Testis (tissue), 5 donors: ENCODE measurements at regions of chr17 and their contacts with region 1.

Region 1: DNA sequence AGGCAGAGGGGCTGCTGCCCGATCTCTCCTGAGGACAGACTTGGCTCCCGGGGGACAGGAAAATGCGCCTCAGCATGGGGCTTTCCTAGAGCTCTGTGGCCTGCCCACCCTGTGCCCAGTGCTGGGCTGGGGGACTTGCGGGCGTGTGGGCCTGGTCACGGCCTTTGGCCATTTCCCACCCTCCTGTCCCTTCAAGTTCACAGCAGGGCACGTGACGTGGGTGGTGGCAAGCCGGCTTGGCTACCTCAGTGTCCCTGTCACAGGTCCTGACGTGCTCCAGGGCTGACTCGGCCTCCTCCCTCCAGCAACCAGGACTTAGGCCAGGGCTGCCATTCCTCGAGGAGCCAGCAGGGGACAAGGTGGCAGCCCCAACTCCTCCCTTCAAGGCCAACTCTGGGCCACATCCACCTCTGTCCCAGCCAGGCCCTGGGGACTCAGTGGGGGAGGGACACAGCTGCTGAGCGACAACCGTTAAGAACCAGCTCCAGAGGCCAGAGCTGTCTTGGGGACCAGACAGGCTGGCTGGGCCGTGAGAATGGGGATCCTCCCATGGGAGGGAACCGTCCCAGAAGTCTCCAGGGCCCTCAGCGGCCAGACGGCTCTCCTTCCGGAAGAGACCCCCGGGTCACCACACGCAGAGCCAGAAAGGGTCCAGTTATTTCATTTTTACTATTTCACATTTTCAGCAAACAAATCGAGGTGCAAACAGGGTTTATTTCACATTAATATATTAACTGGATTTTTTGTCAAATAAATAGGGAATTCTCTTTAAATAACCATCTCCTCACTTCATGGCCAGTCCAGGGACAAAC is 1.1 kb upstream of the UNC13D start:
- DNase-seq: peak; percentile 83
- H3K4me3 ChIP-seq: no peak overlapping the region
- H3K27ac ChIP-seq: peak overlapping the region; percentile 55 to 64
- H3K4me1 ChIP-seq: peaks cover 41% of the 10 kb centered on the region
- H3K27me3 ChIP-seq: no peaks in the 10 kb centered on the region
- CTCF ChIP-seq: peak; percentile 68 to 85 (median 83)
- POLR2A ChIP-seq: no peak

Region 2: GRCh38 chr17:75779231-75779986 is 65.8 kb before region 1 on chr17:
- intact Hi-C with region 1: loop called (anchors 10 kb)
- DNase-seq: peak; percentile 98
- H3K4me3 ChIP-seq: peak overlapping the region; percentile 99
- H3K27ac ChIP-seq: peak overlapping the region; percentile 98 to 99
- H3K4me1 ChIP-seq: peaks cover 29% of the 10 kb centered on the region
- H3K27me3 ChIP-seq: no peaks in the 10 kb centered on the region
- CTCF ChIP-seq: peak in 1 of 3 experiments; percentile 2
- POLR2A ChIP-seq: peak; percentile 99